ENCODE measurements at regions of chr19 and their contacts with region 1.

Region 1: DNA sequence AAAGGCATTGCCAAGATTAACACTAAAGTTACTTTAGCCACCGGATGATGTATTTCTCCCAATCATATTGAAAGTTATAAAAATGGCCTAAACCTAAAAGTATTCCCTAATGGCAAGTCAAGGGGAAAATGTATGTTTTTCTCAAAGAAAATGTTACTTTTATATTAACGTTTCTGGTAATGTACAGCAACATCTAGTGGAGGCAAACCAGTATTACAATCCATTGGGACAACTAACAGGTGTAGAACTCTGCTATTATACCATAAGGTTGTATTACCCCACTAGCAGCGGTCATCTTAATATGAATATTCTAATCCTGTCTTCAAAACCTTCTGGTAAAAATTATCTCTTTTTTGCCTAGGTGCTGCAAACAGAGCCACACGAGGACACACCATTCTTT is 69.2 kb downstream of the ZNF100 start:
- DNase-seq: no peak
- H3K4me3 Mint-ChIP-seq: no peak overlapping the region
- H3K27ac Mint-ChIP-seq: no peak overlapping the region
- H3K4me1 Mint-ChIP-seq: no peaks in the 10 kb centered on the region
- H3K27me3 Mint-ChIP-seq: no peaks in the 10 kb centered on the region

Region 2: DNA sequence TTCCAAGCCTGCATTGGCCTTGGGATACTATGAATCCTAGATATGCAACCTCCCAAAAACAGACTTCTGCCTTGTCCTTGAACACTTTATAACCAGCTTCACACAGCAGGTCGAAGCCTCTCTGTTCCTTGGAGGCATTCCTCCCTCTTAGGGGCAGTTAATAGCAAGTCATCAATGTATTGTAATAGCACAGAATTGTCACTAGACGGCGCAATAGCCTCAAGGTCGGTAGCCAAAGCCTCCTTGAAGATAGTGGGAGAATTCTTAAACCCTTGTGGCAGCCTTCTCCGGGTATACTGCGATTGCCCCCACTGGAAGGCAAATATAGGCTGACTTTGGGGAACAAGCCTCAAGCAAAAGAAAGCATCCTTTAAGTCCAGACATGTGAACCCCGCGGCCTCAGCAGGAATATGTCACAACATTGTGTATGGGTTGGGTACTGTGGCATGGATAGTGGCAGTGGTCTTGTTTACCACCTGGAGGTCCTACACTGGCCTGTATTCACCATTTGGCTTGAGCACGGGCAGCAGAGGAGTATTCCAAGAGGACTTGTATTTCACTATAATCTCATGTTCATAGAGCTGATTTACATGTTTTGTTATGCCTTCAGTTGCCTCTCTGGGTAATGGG is 495.2 kb before region 1 on chr19:
- CTCF ChIA-PET with region 1: interaction called, 6 read pairs
- POLR2A ChIA-PET with region 1: no interaction called
- intact Hi-C with region 1: loop called (anchors 1 kb)
- DNase-seq: peak; percentile 36
- H3K4me3 Mint-ChIP-seq: no peak overlapping the region
- H3K27ac Mint-ChIP-seq: no peak overlapping the region
- H3K4me1 Mint-ChIP-seq: no peaks in the 10 kb centered on the region
- H3K27me3 Mint-ChIP-seq: peaks cover 1% of the 10 kb centered on the region

Region 3: GRCh38 chr19:21559444-21559843 is 138.8 kb before region 1 on chr19:
- CTCF ChIA-PET with region 1: no interaction called
- POLR2A ChIA-PET with region 1: no interaction called
- intact Hi-C with region 1: no loop called
- DNase-seq: no peak
- H3K4me3 Mint-ChIP-seq: no peak overlapping the region
- H3K27ac Mint-ChIP-seq: no peak overlapping the region
- H3K4me1 Mint-ChIP-seq: peaks cover under 1% of the 10 kb centered on the region
- H3K27me3 Mint-ChIP-seq: no peaks in the 10 kb centered on the region

Region 4: GRCh38 chr19:21680671-21681070 is 17.5 kb before region 1 on chr19:
- CTCF ChIA-PET with region 1: no interaction called
- POLR2A ChIA-PET with region 1: no interaction called
- intact Hi-C with region 1: no loop called
- DNase-seq: no peak
- H3K4me3 Mint-ChIP-seq: no peak overlapping the region
- H3K27ac Mint-ChIP-seq: no peak overlapping the region
- H3K4me1 Mint-ChIP-seq: peaks cover 4% of the 10 kb centered on the region
- H3K27me3 Mint-ChIP-seq: peaks cover 18% of the 10 kb centered on the region